Activated T-helper 1 cell treated with anti-CD3 and anti-CD28 coated beads, Interleukin-12 subunit alpha, Interleukin-12 subunit beta, Interleukin-2, Interleukin-4 antibody, amounts not matched to agents 30 ng/mL and 10 ng/mL and 1 ng/mL, durations not matched to agents 14 hours and 24 hours and 36 hours (primary cell): ENCODE measurements at regions of chrX and their contacts with region 1.

Region 1: DNA sequence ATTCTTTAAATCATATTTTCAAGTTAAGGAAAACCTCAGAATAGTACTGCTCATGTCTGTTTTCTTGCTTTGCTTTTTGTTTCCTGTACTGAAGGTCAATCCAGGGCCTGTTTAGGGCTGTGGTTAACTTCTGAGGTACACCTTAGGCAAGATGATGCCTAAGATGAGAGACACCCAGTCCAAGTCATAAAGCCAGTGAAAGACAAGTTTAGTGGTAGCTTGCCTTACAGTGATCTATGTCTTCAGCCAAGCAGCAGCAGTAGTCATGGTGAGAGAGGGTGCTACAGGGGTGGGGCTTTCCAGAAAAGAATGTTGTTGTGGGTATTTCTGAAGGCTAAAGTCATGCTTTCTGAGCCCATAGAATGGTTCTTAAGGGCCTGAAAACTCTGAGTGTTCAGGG is 173.7 kb downstream of the VSIG4 start:
- DNase-seq: peak; percentile 31
- H3K4me3 Mint-ChIP-seq: no peak overlapping the region
- H3K27ac Mint-ChIP-seq: peak overlapping the region; percentile 67
- H3K4me1 Mint-ChIP-seq: peaks cover 24% of the 10 kb centered on the region
- H3K27me3 Mint-ChIP-seq: no peaks in the 10 kb centered on the region

Region 2: DNA sequence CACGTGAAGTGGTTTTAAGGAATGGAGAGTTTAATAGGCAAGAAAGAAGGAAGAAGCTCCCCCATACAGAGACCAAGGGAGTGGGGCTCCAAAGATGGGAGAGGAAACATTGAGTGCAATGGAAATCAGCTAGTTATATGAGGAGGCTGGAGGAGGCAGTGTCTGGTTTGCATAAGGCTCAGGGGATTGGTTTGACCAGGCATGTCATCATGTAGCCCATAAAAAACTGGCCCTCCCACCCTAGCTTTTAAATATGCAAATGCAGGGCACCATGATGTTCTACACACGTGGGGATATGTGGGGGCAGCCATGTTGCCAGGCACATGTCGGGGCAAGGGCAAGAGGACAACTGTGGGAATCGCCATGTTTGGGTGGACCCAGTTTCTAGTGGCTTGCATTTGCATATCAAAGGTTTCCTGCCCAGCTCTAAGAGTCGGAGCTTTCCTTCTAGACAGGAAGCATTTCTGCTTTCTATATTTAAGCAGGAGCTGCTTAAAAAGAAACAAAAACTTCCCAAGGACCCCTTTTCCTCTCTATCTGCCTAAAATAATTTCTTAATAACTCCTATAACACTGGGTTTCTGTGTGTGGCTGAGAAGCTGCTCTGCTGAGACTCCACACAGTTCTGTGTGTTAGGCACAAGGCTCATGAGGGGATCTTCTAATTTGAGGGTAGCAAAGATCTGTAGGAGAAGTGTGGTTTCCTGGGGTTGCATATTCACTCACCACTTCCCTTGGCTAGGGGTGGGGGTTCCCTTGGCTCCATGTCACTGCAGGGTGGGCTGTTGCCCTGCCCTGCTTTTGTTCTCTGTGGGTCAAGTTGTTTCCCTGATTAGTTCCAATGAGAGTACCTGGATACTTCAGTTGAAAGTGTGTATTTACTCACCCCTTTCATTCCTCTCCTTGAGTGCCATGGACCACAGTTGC is 60.2 kb after region 1 on chrX:
- intact Hi-C with region 1: loop called (anchors 5 kb)
- DNase-seq: peak; percentile 39
- H3K4me3 Mint-ChIP-seq: peak overlapping the region; percentile 59
- H3K27ac Mint-ChIP-seq: peak overlapping the region; percentile 89
- H3K4me1 Mint-ChIP-seq: peaks cover 50% of the 10 kb centered on the region
- H3K27me3 Mint-ChIP-seq: no peaks in the 10 kb centered on the region